Activated CD4-positive, alpha-beta T cell treated with anti-CD3 and anti-CD28 coated beads for 36 hours (primary cell): ENCODE measurements at regions of chr5 and their contacts with region 1.

Region 1: GRCh38 chr5:177497292-177498033 is at the start of gene PDLIM7:
- DNase-seq: peak; percentile 98
- ATAC-seq: peak; percentile 86
- H3K4me3 Mint-ChIP-seq: peak within 1 kb of the TSS; percentile 73
- H3K27ac Mint-ChIP-seq: peak within 1 kb of the TSS; percentile 37
- H3K4me1 Mint-ChIP-seq: peaks cover 31% of the 10 kb centered on the region
- H3K27me3 Mint-ChIP-seq: peaks cover 12% of the 10 kb centered on the region
- total RNA-seq, gene PDLIM7: 41.9 to 50.2 TPM

Region 2: GRCh38 chr5:177311723-177312648 is 185.5 kb before region 1 on chr5 and contains the start of gene MXD3:
- CTCF ChIA-PET with region 1: interaction called, 28 read pairs
- POLR2A ChIA-PET with region 1: no interaction called
- intact Hi-C with region 1: loop called (anchors 1 to 5 kb)
- DNase-seq: peak; percentile 99
- ATAC-seq: peak; percentile 88
- H3K4me3 Mint-ChIP-seq: peak within 1 kb of the TSS; percentile 85
- H3K27ac Mint-ChIP-seq: peak within 1 kb of the TSS; percentile 84
- H3K4me1 Mint-ChIP-seq: peaks cover 28% of the 10 kb centered on the region
- H3K27me3 Mint-ChIP-seq: no peaks in the 10 kb centered on the region
- total RNA-seq, gene MXD3: 21.3 to 27.2 TPM

Region 3: GRCh38 chr5:177431317-177432142 is 65.9 kb before region 1 on chr5:
- CTCF ChIA-PET with region 1: interaction called, 5 read pairs
- POLR2A ChIA-PET with region 1: interaction called, 3 read pairs
- intact Hi-C with region 1: loop called (anchors 1 kb)
- DNase-seq: peak; percentile 81
- ATAC-seq: peak; percentile 19
- H3K4me3 Mint-ChIP-seq: peak overlapping the region; percentile 88
- H3K27ac Mint-ChIP-seq: peak overlapping the region; percentile 94
- H3K4me1 Mint-ChIP-seq: peaks cover 73% of the 10 kb centered on the region
- H3K27me3 Mint-ChIP-seq: no peaks in the 10 kb centered on the region

Region 4: GRCh38 chr5:177509381-177509951 is 12.0 kb after region 1 on chr5 and contains the start of gene DOK3:
- CTCF ChIA-PET with region 1: interaction called, 13 read pairs
- POLR2A ChIA-PET with region 1: no interaction called
- intact Hi-C with region 1: no loop called
- DNase-seq: peak; percentile 43
- ATAC-seq: peak; percentile 20
- H3K4me3 Mint-ChIP-seq: no peak within 1 kb of the TSS
- H3K27ac Mint-ChIP-seq: no peak within 1 kb of the TSS
- H3K4me1 Mint-ChIP-seq: peaks cover 10% of the 10 kb centered on the region
- H3K27me3 Mint-ChIP-seq: no peaks in the 10 kb centered on the region
- total RNA-seq, gene DOK3: 4.2 to 4.8 TPM